Calu3 (cell line): ENCODE measurements at regions of chr1 and their contacts with region 1.

Region 1: DNA sequence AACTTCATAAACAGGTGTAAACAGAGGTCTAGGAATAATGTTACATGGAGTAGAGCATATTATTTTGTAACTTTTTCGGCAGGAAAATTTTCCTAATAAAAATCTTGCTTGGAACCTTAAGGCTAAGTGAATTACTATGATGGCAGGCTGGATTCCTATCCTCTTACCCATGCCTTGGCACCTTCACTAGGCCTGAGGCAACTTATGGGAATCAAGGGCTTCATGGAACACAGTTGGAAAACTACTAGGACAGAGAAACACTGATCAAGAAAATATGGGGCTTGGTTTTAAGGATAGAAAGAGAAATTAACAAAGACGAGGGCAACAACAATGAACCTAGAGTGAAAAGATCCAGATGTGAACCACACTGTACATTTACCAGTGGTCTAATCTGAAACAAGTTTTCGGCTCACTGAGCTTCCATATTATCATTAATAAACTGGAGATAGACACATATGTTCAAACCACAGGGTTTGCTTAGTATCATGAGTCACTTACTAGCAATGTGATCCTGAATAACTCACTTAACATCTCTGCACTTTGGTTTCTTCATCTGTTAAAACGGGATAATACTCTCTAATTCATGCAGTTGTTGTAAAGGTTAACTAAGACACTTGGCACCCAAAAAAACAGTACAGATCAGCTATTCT is 68.5 kb downstream of the GPATCH2 start:
- DNase-seq: no peak
- H3K4me3 Mint-ChIP-seq: no peak overlapping the region
- H3K27ac Mint-ChIP-seq: no peak overlapping the region
- H3K4me1 Mint-ChIP-seq: peaks cover 21% of the 10 kb centered on the region
- H3K27me3 Mint-ChIP-seq: no peaks in the 10 kb centered on the region
- CTCF ChIP-seq: no peak

Region 2: GRCh38 chr1:217431393-217431792 is 131.0 kb before region 1 on chr1:
- CTCF ChIA-PET with region 1: no interaction called
- intact Hi-C with region 1: loop called (anchors 2 kb)
- DNase-seq: no peak
- H3K4me3 Mint-ChIP-seq: no peak overlapping the region
- H3K27ac Mint-ChIP-seq: no peak overlapping the region
- H3K4me1 Mint-ChIP-seq: no peaks in the 10 kb centered on the region
- H3K27me3 Mint-ChIP-seq: no peaks in the 10 kb centered on the region
- CTCF ChIP-seq: no peak